Common myeloid progenitor, CD34-positive (primary cell): ENCODE measurements at regions of chr2 and their contacts with region 1.

Region 1: DNA sequence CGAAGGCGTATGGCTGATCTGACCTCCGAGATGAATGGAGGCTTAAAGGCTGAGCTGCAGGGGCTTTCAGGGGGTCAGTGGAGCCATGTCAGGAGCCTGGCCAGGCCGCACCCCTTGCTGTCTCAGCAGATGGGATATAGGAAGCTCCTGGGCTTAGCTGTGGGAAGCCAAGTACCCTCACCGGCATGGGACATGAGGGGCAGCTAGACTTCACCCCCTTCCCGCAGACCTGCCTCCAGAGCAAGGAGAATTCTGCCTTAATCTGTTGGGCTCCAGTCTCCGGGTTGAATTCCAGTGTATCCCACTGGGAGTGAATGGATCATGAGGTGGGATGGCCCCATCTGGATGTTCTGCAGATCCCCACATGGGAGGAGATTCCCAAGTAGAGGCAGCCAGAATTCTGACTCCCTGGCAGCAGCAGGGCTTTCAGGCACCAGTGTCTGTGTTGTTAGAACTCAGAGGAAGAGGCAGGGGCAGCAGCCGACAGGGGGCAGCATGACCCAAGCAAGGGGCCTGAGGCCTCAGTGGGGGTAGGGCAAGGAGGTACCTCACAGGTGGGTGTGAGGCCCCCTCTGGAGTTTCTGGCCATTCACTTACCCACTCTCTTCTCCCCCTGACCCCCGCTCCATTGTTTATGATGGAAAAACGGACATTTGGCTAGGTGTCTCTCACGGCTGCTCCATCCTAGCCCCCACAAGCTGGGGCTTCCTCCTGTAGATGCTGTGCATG is 19.1 kb downstream of the CAPG start:
- DNase-seq: peak; percentile 61 to 75 (median 68)
- H3K4me3 ChIP-seq: no peak overlapping the region
- H3K27ac ChIP-seq: no peak overlapping the region
- H3K4me1 ChIP-seq: peaks cover 0 to 5% (median under 1%) of the 10 kb centered on the region in 4 experiments
- H3K27me3 ChIP-seq: no peaks in the 10 kb centered on the region

Region 2: GRCh38 chr2:85400866-85401849 is 10.1 kb after region 1 on chr2:
- CTCF ChIA-PET with region 1: interaction called, 41 read pairs
- POLR2A ChIA-PET with region 1: no interaction called
- DNase-seq: no peak
- H3K4me3 ChIP-seq: no peak overlapping the region
- H3K27ac ChIP-seq: no peak overlapping the region
- H3K4me1 ChIP-seq: peaks cover 3 to 34% (median 25%) of the 10 kb centered on the region in 4 experiments
- H3K27me3 ChIP-seq: no peaks in the 10 kb centered on the region

Region 3: DNA sequence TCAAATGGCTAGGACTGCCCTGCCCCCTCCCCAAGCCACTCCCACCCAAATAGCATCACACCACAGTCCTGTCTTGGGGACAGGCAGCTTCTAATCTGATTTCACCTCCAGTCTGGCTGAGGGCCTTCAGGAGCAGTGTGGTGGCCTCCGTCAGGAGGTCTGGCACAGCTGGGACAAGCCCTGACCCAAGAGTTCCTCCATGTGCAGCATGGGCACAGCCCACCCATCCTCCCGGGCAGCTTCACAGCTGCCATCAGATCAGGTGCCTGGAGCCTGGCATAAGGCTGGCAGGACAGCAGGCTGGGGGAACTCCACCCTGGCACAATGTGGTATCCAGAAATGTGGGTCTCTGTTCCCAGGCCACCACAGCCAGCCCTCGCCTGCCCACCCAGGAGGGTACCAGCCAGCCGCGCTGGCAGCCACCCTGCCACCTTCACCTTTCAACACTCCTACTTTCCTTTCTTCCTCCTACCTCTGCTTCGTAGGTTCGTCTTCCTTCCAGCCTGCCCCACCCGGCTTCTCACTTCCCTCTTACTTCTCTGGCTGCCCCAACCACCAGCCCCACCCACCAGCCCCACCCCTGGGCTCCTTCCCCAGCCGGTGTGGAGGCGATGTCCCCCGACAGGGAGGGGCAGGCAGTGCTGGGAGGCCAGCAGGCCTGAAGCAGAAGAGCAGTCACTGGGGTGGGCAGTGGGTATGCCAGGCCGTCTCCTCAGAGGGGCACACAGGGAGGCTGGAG is 18.9 kb after region 1 on chr2 and contains the start of gene CAPG:
- CTCF ChIA-PET with region 1: interaction called, 26 read pairs
- POLR2A ChIA-PET with region 1: interaction called, 6 read pairs
- DNase-seq: peak in 2 of 3 donors; percentile 63 to 74
- H3K4me3 ChIP-seq: peak within 1 kb of the TSS in 5 of 7 experiments; percentile 32 to 69 (median 50)
- H3K27ac ChIP-seq: no peak within 1 kb of the TSS
- H3K4me1 ChIP-seq: peaks cover 24 to 92% (median 86%) of the 10 kb centered on the region in 4 experiments
- H3K27me3 ChIP-seq: no peaks in the 10 kb centered on the region